ENCODE measurements at regions of chr19 and their contacts with region 1.

Region 1: DNA sequence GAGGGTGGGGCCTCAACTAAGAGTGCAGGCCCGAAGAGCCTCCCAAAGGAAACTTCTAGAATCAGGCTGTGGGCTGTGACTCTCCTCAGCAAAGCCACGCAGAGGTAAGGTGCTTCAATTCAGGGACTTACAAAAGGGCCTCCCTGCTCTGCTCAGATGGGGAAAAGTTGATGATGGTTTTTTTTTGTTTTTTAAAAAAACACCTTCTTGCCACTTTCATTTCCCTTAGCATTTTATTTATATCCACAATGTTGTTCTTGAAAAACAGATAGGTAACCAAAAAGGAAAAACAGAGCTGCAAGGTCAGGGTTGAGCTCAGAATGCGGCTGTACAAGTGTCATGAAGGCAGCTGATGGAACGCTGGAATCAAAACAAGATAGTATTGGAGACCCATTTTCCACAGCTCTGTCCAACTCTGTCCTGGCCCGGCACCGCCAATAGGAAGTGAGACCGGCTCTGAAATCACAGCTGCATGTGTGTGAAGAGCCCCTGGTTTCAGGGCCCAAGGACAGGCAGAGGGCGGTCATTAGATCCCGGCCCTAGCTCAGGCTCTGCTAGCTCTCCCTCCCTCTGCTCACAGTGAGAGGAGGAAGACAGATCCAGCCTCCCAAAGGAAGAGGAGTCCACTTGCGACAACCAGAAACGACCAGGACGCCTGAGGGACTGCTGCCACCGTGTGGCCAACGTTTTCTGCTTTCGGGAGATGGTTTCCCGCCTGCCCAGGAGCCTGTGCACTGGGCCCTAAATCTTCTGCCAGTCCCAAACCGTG is 58.3 kb downstream of the KLF2 start:
- DNase-seq: peak; percentile 63
- ATAC-seq: peak; percentile 59
- H3K4me3 Mint-ChIP-seq: peak overlapping the region; percentile 57
- H3K27ac Mint-ChIP-seq: peak overlapping the region; percentile 94
- H3K4me1 Mint-ChIP-seq: peaks cover 82% of the 10 kb centered on the region
- H3K27me3 Mint-ChIP-seq: no peaks in the 10 kb centered on the region
- CTCF ChIP-seq: no peak

Region 2: DNA sequence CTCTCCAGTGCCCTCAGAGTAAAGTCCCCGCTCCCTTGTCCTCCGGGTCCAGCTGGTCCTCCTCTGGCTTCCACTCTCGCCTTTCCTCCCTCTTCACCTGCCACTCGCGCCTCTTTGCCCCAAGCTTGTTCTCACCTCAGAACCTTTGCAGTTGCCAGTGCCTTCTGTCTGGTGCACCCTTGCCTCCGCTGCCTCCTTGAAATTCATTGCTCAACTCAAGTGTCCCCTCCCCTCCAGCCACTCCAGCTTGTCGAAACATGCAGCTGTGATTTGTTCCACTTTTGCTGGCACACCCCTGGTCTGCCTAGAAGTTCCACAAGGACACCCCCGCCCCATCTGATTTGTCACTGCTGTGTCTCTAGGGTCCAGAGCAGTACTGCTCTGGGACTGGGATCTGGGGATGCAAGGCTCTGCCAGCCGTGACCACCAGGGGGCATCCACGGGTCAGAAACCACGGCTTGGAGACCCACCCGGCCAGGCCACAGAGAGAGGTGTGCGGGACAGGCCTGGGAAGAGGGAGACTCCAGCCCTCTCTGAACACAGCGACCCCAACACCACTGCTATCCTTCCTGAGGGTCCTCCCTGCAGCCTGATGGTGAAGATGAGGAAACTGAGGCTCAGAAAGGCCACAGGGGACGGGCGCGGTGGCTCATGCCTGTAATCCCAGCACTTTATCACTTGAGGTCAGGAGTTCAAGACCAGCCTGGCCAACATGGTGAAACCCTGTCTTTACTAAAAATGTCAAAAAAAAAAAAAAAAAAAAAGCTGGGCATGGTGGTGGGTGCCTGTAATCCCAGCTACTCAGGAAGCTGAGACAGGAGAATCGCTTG is 135.4 kb before region 1 on chr19:
- CTCF ChIA-PET with region 1: interaction called, 69 read pairs
- POLR2A ChIA-PET with region 1: interaction called, 25 read pairs
- intact Hi-C with region 1: loop called (anchors 1 kb)
- DNase-seq: peak; percentile 85
- ATAC-seq: peak; percentile 88
- H3K4me3 Mint-ChIP-seq: peak overlapping the region; percentile 17
- H3K27ac Mint-ChIP-seq: peak overlapping the region; percentile 32
- H3K4me1 Mint-ChIP-seq: peaks cover 41% of the 10 kb centered on the region
- H3K27me3 Mint-ChIP-seq: no peaks in the 10 kb centered on the region
- CTCF ChIP-seq: peak; percentile 33

Region 3: DNA sequence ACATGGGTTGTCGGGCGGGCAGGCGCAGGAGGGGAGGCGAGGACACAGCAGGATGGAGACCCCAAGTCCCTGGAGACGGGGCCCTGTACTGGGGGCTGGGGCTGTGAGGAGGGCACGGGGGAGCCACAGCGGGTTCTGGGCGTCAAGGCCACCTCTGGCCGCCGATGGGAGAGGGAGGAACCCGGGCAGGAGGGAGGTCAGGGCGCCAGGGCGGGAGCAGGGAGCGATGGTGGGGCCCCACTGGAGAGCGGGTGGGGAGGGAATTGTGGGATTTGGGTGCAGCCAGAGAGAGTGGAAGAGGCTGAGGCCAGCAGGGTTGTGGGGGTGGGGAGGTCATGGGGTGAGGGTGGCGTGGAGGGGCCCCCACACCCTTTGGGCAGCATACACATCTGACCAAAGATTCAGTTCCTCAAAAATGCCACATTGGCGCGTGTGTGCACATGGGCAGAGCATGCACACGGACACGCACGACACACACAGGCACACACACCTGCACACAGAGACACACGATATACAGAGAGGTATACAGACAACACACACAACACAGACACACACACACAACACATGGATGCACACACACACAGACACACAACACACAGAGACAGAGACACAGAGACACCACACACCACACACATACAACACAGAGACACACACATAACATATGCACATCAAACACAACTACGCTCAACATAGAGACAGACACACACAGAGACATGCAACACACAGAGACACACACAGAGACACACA is 130.3 kb before region 1 on chr19:
- CTCF ChIA-PET with region 1: interaction called, 69 read pairs
- POLR2A ChIA-PET with region 1: interaction called, 25 read pairs
- intact Hi-C with region 1: loop called (anchors 1 kb)
- DNase-seq: no peak
- ATAC-seq: peak; percentile 65
- H3K4me3 Mint-ChIP-seq: peak overlapping the region; percentile 17
- H3K27ac Mint-ChIP-seq: no peak overlapping the region
- H3K4me1 Mint-ChIP-seq: peaks cover 55% of the 10 kb centered on the region
- H3K27me3 Mint-ChIP-seq: no peaks in the 10 kb centered on the region
- CTCF ChIP-seq: no peak

Region 4: DNA sequence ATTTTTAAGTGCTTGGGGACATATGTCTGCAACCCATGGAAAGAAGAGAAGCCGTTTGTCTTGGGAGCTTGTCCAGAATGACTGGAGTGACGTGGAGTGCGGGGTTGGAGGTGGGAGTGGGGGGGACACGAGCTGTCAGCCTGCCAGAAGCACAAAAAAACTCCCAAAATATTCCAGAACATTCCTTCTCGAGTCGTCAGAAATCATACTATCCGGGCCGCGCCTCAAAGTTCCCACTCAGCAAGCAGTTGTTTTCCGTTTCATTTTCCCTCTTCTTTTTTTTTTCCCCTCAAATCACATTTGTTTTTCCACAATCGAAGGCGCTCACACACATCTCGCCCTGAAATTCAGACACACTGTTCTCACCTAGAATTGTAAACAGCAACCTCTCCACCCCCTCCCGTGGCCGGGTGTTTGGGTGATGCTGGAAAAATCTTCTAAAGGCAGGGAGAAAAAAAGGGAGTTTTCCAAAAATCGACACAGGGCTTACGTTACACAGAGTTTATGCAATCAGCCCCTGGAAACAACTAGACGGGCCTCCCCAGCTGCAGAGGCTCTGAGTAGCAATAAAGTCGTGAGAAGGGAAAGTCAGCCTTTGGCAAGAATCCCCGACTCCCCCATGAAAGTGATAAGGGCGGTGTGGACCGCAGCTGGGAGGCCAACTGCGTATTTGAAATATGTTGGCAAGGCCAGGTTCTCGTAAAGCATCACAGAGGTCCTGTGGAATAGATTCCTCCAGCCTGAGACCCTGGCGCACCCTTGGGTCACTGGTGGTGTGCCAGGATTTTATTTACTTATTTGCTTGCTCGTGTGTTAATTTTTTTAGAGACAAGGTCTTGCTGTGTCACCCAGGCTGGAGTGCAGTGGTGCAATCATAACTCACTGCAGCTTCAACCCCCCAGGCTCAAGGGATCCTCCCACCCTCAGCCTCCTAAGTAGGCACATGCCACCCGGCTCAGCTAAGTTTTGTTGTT is 89.6 kb before region 1 on chr19:
- CTCF ChIA-PET with region 1: no interaction called
- POLR2A ChIA-PET with region 1: no interaction called
- intact Hi-C with region 1: no loop called
- DNase-seq: no peak
- ATAC-seq: no peak
- H3K4me3 Mint-ChIP-seq: no peak overlapping the region
- H3K27ac Mint-ChIP-seq: no peak overlapping the region
- H3K4me1 Mint-ChIP-seq: no peaks in the 10 kb centered on the region
- H3K27me3 Mint-ChIP-seq: no peaks in the 10 kb centered on the region
- CTCF ChIP-seq: no peak

Region 5: DNA sequence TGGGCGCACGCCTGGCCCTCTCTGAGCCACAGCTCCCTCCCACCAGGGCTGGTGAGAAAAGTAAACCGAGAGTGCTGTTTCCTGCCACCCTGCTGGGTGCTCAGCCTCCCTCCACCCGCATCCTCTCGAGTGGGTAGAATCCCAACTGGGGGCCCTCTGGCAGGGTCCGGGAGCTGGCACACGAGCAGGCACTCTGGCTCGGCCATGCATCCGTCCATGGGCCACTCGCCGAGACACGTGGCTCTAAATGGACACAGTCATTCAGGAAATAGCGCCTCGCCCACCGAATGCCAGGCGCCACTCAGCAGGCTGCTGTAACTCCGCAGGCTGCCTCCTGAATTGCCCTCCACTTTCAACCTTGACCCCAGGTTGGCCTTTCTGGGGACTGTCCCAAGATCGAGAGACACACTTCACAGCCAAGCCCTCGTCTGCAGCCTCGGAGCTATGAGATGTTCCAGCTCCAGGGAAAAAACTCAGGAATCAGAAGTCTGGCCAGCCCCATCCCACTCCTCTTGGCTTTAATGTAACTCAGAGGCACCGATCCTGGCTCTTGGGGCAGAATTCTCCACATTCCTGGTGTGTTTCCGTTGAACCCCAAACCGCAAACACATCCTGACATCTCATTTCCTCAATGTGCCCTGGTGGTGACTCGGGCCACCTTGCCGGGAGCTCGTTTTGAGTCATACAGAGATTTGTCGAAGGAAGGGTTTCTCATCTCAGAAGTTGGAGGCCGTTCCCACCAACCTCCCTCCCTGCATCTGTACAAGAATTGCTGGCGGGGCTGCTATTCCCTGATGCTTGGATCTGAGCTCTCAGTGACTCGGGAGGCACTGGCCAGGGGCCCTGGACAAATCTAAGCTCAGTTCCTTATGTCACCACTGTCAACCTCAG is 44.2 kb before region 1 on chr19:
- CTCF ChIA-PET with region 1: interaction called, 16 read pairs
- POLR2A ChIA-PET with region 1: interaction called, 63 read pairs
- intact Hi-C with region 1: loop called (anchors 1 kb)
- DNase-seq: no peak
- ATAC-seq: peak; percentile 19
- H3K4me3 Mint-ChIP-seq: peak overlapping the region; percentile 76
- H3K27ac Mint-ChIP-seq: peak overlapping the region; percentile 75
- H3K4me1 Mint-ChIP-seq: peaks cover 64% of the 10 kb centered on the region
- H3K27me3 Mint-ChIP-seq: no peaks in the 10 kb centered on the region
- CTCF ChIP-seq: no peak

Region 6: DNA sequence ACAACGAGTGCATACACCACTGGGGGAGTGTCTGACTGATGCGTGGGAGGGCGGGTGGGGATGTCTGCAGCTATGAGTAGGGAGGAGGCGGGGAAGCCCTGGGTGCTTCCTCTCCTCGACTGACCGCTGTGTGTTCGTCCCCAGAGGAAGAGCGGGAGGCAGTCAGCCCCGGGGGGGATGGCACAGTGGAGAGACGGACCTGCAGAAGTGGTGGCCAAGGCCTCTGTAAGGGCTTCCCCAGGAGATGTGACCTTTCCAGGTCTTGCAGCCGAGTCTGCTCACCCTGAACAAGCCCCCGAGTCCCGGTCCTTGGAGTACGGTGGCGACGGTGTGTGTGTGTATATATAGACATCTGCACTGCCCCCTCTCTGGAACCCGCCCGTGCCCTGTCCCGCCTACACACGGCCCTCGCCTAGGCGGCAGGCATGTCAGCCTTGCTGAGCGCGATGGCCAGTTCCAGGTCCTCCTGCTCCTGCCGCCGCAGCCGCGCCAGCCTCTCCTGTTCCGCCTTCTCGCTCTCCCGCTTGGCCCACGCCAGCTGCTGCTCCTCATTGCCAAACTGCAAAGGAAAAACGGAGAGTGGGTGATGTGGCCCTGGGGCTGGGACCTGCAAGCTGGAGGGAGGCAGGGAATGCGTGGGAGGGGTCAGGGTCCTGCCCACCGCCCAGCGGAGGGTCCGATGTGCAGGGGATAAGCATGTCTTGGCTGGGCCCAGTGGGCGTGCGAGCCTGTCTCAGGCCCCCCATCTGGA is 27.5 kb before region 1 on chr19:
- CTCF ChIA-PET with region 1: interaction called, 3 read pairs
- POLR2A ChIA-PET with region 1: interaction called, 19 read pairs
- intact Hi-C with region 1: no loop called
- DNase-seq: no peak
- ATAC-seq: peak; percentile 63
- H3K4me3 Mint-ChIP-seq: peak overlapping the region; percentile 66
- H3K27ac Mint-ChIP-seq: no peak overlapping the region
- H3K4me1 Mint-ChIP-seq: peaks cover 83% of the 10 kb centered on the region
- H3K27me3 Mint-ChIP-seq: no peaks in the 10 kb centered on the region
- CTCF ChIP-seq: no peak

Region 7: GRCh38 chr19:16397791-16398471 is 15.0 kb after region 1 on chr19:
- CTCF ChIA-PET with region 1: interaction called, 8 read pairs
- POLR2A ChIA-PET with region 1: interaction called, 16 read pairs
- intact Hi-C with region 1: loop called (anchors 1 kb)
- DNase-seq: no peak
- ATAC-seq: no peak
- H3K4me3 Mint-ChIP-seq: peak overlapping the region; percentile 59
- H3K27ac Mint-ChIP-seq: peak overlapping the region; percentile 91
- H3K4me1 Mint-ChIP-seq: peaks cover 77% of the 10 kb centered on the region
- H3K27me3 Mint-ChIP-seq: no peaks in the 10 kb centered on the region
- CTCF ChIP-seq: no peak

Region 8: DNA sequence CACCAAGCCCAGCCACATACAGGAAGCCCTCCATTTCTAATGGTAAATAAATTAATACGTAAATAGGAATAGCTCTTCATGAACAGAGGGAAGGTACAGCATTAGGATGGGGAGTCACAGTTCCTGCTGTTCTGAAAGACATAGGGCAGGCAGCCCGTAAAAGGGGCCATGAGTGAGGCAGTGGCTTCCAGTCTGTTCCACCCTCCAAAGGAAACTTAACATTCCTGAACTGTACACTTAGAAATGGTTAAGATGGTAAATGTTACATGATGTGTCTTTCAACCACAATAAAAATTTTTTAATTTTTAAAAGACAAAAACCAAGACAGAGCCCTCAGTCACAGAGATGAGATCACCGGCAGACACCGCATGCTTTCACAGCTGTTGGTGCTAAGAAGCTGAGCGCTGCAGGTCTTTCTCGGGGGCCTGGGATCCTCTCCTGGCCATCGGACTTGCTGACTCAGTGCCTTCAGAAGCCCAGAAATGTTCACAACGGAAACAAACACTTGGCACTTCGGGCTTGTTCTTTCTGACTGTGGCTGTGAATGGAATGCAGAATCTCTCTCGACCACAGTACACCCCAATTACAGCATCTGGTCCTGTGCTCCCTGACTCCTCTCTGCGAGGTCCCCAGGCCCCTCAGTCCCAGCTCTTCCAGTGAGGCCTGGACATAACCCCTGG is 52.4 kb after region 1 on chr19:
- CTCF ChIA-PET with region 1: no interaction called
- POLR2A ChIA-PET with region 1: no interaction called
- intact Hi-C with region 1: no loop called
- DNase-seq: no peak
- ATAC-seq: no peak
- H3K4me3 Mint-ChIP-seq: no peak overlapping the region
- H3K27ac Mint-ChIP-seq: peak overlapping the region; percentile 70
- H3K4me1 Mint-ChIP-seq: peaks cover 35% of the 10 kb centered on the region
- H3K27me3 Mint-ChIP-seq: no peaks in the 10 kb centered on the region
- CTCF ChIP-seq: no peak

Region 9: DNA sequence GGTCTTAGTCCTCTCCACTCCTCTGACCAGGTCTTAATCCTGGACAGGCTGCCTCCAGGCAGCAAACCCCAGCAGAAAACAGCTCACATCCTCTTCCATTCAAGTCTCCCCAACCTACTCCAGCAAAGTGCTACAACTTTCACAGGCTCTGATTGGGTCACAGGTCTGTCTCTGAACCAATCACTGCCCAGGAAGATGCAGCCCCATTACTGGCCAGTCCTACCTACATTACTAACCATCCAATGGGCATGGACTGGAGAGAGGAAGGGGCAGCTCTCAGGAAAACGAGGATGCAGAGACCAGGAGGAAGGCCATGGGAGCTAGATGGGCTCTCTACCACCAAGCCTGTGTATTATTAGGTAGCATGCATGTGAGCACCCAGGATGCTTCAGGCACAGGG is 232.8 kb after region 1 on chr19:
- CTCF ChIA-PET with region 1: no interaction called
- POLR2A ChIA-PET with region 1: no interaction called
- intact Hi-C with region 1: no loop called
- DNase-seq: no peak
- ATAC-seq: no peak
- H3K4me3 Mint-ChIP-seq: no peak overlapping the region
- H3K27ac Mint-ChIP-seq: no peak overlapping the region
- H3K4me1 Mint-ChIP-seq: peaks cover 97% of the 10 kb centered on the region
- H3K27me3 Mint-ChIP-seq: no peaks in the 10 kb centered on the region
- CTCF ChIP-seq: no peak